K562 (cell line): ENCODE measurements at regions of chrX and their contacts with region 1.

Region 1: GRCh38 chrX:71652405-71652804 is 14.9 kb upstream of the LOC101059915 start:
- DNase-seq: peak; percentile 38 to 65 (median 42)
- ATAC-seq: peak; percentile 85
- H3K4me3 ChIP-seq: no peak overlapping the region
- H3K27ac ChIP-seq: no peak overlapping the region
- H3K4me1 ChIP-seq: no peaks in the 10 kb centered on the region; a peak in 2 of 5 replicates
- H3K27me3 ChIP-seq: no peaks in the 10 kb centered on the region
- CTCF ChIP-seq: peak; percentile 53 to 72 (median 60)
- EP300 ChIP-seq: no peak
- POLR2A ChIP-seq: no peak
- RAD21 ChIP-seq: peak; percentile 25 to 64

Region 2: GRCh38 chrX:71432733-71433132 is 219.7 kb before region 1 on chrX:
- CTCF ChIA-PET with region 1: no interaction called
- POLR2A ChIA-PET with region 1: no interaction called
- in situ Hi-C with region 1: no loop called
- intact Hi-C with region 1: loop called (anchors 5 kb)
- DNase-seq: no peak
- ATAC-seq: no peak
- H3K4me3 ChIP-seq: no peak overlapping the region
- H3K27ac ChIP-seq: no peak overlapping the region
- H3K4me1 ChIP-seq: no peaks in the 10 kb centered on the region
- H3K27me3 ChIP-seq: no peaks in the 10 kb centered on the region
- CTCF ChIP-seq: no peak
- EP300 ChIP-seq: no peak
- POLR2A ChIP-seq: no peak
- RAD21 ChIP-seq: no peak

Region 3: DNA sequence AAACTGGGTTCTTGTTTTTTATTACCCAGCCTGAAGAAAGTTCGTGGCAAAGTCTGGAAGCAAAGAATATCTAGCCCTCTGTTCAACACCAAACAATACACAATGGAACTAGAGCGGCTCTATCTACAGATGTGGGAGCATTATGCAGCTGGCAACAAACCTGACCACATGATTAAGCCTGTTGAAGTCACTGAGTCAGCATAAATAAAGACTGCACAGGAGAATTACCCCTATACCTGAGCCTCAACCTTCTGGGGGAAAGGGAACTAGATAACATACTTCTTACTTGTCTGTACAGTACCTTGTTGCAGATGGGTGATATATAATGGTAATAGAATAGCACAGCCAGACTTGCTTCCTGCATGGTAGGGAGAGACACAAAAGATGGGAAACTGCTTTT is 78.8 kb before region 1 on chrX:
- CTCF ChIA-PET with region 1: no interaction called
- POLR2A ChIA-PET with region 1: no interaction called
- in situ Hi-C with region 1: no loop called
- intact Hi-C with region 1: loop called (anchors 5 kb)
- DNase-seq: no peak
- ATAC-seq: no peak
- H3K4me3 ChIP-seq: no peak overlapping the region
- H3K27ac ChIP-seq: no peak overlapping the region
- H3K4me1 ChIP-seq: peaks cover 0 to 5% of the 10 kb centered on the region in 2 experiments; a peak in 2 of 5 replicates
- H3K27me3 ChIP-seq: no peaks in the 10 kb centered on the region
- CTCF ChIP-seq: no peak
- EP300 ChIP-seq: no peak
- POLR2A ChIP-seq: no peak
- RAD21 ChIP-seq: no peak

Region 4: DNA sequence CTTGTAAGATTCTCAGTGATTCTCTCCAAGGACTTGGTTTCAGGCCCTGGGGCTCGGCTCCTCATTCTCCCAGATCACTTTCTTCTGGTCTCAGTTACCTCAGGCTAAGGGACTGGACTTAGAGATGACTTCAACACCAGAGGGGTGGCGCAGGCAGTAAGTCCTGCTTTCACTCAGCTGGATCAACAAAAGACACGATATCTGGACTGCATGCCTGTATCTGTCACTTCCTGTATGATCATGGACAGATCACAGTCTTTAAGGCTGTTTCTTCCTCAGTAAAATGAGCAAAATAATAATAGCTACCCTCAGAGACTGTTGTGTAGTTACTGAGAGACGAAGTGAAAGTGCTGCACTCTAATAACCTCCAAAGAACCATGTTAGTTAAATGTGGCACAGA is 14.6 kb before region 1 on chrX:
- CTCF ChIA-PET with region 1: no interaction called
- POLR2A ChIA-PET with region 1: no interaction called
- in situ Hi-C with region 1: no loop called
- intact Hi-C with region 1: no loop called
- DNase-seq: peak in 2 of 4 experiments; percentile 22 to 23
- ATAC-seq: peak; percentile 73
- H3K4me3 ChIP-seq: no peak overlapping the region
- H3K27ac ChIP-seq: no peak overlapping the region
- H3K4me1 ChIP-seq: no peaks in the 10 kb centered on the region; a peak in 1 of 5 replicates
- H3K27me3 ChIP-seq: no peaks in the 10 kb centered on the region
- CTCF ChIP-seq: no peak
- EP300 ChIP-seq: no peak
- POLR2A ChIP-seq: no peak
- RAD21 ChIP-seq: no peak

Region 5: DNA sequence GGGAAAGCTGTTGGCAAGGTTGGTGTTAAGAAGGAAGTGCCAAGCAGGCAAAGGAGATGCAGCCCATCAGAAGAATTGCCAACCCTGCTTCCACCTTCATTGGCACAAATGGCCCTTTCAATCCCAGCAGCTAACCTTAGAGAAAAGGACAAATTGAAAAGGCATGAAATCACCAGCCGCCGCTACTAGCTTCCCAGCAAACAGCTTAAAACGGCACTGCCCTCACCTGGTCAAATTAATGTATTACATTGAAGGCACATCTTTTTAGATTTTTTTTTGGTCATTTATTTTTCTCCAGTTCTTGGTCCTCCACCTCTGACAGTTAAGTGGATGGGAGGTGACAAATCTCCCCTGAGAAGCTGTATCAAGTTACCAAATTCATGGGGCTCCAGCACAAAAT is 207.2 kb after region 1 on chrX:
- CTCF ChIA-PET with region 1: no interaction called
- POLR2A ChIA-PET with region 1: no interaction called
- in situ Hi-C with region 1: loop called (anchors 25 kb)
- intact Hi-C with region 1: no loop called
- DNase-seq: peak in 2 of 4 experiments; percentile 15 to 50
- ATAC-seq: peak; percentile 67
- H3K4me3 ChIP-seq: no peak overlapping the region
- H3K27ac ChIP-seq: no peak overlapping the region
- H3K4me1 ChIP-seq: no peaks in the 10 kb centered on the region; a peak in 2 of 5 replicates
- H3K27me3 ChIP-seq: peaks cover 0 to 12% of the 10 kb centered on the region in 2 experiments; a peak in 2 of 5 replicates
- CTCF ChIP-seq: peak; percentile 60 to 70 (median 61)
- EP300 ChIP-seq: no peak
- POLR2A ChIP-seq: no peak
- RAD21 ChIP-seq: peak; percentile 55 to 62